Upper lobe of right lung (tissue), 1 donor: ENCODE measurements at regions of chr9 and their contacts with region 1.

Region 1: DNA sequence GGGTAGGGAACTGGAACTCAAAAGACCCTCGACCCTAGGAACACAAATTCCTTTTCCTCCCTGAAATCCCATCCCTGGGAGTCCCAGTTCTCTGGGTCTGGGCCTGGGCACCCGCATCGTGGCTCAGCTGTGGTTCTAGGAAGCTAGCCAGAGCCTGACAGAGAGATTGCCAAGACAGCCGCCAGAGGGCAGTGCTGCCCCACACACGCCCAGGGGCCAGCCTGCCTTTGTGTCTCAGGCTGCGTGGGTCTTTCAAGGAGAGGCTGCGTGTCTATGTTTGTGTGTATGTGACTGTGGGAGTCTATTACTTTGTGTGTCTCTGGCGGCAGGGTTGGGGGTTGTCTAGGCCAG is 32.0 kb upstream of the TTLL11 start:
- DNase-seq: peak; percentile 88
- ATAC-seq: peak; percentile 84
- H3K4me3 ChIP-seq: no peak overlapping the region
- H3K27ac ChIP-seq: no peak overlapping the region
- H3K4me1 ChIP-seq: peaks cover 19% of the 10 kb centered on the region
- H3K27me3 ChIP-seq: peaks cover 22% of the 10 kb centered on the region
- CTCF ChIP-seq: peak; percentile 95

Region 2: DNA sequence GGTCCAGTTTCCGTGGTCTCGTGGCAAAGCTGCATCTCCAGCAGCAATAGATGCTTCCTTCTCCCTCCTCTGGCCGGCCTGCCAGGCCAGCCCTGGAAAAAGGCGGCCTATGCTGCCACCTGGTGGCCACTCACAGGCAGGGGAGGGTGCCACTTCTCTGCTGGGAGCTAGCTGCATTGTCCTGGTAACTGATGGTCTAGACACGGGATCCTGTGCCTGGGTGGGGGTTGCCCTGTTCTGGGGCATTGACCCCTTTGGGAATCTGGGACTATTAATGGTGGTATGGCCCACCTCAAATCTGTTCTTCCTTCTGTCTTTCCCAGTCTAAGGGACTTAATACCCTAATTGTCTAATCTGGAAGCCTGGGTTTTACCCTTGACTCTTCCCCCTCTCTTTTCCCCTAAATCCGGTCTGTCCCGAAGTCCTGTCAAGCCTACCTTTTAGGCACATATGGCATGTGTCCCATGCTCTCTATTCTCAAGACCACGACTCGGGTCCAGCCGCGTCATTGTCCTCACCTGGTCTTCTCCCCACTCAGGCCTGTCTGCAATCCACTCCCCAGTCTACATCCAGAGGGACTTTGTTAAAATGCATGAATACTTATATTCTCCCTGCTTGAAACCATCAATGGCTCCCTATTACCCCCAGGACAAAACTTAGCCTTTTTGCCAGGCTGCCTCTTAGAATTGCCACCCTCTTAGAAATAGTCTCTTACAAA is 225.7 kb after region 1 on chr9:
- intact Hi-C with region 1: loop called (anchors 2 kb)
- DNase-seq: peak; percentile 89
- ATAC-seq: peak; percentile 91
- H3K4me3 ChIP-seq: no peak overlapping the region
- H3K27ac ChIP-seq: no peak overlapping the region
- H3K4me1 ChIP-seq: peaks cover 9% of the 10 kb centered on the region
- H3K27me3 ChIP-seq: no peaks in the 10 kb centered on the region
- CTCF ChIP-seq: peak; percentile 97